A549 (cell line): ENCODE measurements at regions of chr6 and their contacts with region 1.

Region 1: GRCh38 chr6:14066782-14067406 is 50.7 kb upstream of the CD83 start:
- DNase-seq: peak; percentile 54 to 65
- ATAC-seq: peak; percentile 74 to 83
- H3K4me3 ChIP-seq: no peak overlapping the region
- H3K27ac ChIP-seq: no peak overlapping the region
- H3K4me1 ChIP-seq: no peaks in the 10 kb centered on the region
- CTCF ChIP-seq: peak; percentile 70
- EP300 ChIP-seq: no peak
- POLR2A ChIP-seq: no peak
- RAD21 ChIP-seq: peak; percentile 78 to 81

Region 2: DNA sequence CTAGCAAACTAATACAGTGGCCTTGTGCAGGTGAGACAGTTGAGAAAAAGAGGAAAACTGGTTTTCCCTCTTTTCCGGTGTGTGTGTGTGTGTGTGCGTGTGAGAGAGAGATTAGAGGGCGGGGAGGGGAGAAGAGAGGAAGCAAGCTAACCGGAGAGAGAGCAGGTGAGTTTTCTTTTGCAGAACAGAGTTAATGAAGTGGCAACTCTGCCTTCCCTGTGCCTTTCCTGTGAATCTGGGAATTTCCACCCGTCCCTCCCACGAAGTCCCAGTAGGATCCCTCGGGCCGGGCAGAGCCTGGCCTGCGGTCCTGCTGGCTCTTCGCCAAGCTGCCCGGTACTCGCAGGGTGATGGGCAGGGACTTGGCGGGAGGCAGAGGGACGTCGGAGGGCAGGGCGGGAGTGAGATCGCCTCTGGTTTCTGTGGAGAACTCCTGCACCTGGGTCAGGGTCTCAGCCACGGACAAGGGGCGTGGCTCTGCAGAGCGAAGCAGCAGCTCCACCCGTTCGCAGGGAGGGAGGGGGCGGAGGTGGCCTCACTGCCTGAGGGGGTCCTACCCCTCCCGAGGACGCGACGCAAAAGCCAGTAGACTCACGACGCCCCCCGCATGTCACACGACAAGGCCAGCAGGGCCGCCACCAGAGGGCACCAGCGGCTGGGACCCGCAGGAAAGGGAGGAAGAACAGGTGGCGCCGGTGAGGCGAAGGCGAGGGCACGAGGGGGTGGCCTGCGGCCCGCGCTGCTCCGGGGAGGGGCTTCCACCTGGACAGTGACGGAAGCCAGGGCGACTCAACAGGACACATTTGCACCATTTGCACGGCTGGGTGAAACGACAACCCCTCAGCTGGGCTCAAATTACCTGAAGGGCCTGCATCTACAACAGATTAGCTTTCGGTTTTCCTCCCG is 193.4 kb before region 1 on chr6:
- CTCF ChIA-PET with region 1: interaction called, 22 read pairs
- POLR2A ChIA-PET with region 1: no interaction called
- DNase-seq: peak; percentile 58 to 66
- ATAC-seq: peak; percentile 85 to 94
- H3K4me3 ChIP-seq: peak overlapping the region; percentile 61
- H3K27ac ChIP-seq: peak overlapping the region; percentile 32 to 77; a peak in 4 of 6 replicates
- H3K4me1 ChIP-seq: no peaks in the 10 kb centered on the region; the same call in 2 of the 3 replicates
- CTCF ChIP-seq: peak; percentile 75
- EP300 ChIP-seq: no peak
- POLR2A ChIP-seq: no peak
- RAD21 ChIP-seq: peak; percentile 44 to 59

Region 3: GRCh38 chr6:13920552-13920951 is 146.3 kb before region 1 on chr6:
- CTCF ChIA-PET with region 1: interaction called, 186 read pairs
- POLR2A ChIA-PET with region 1: no interaction called
- DNase-seq: no peak
- ATAC-seq: no peak
- H3K4me3 ChIP-seq: no peak overlapping the region
- H3K27ac ChIP-seq: no peak overlapping the region
- H3K4me1 ChIP-seq: 0 out of 3 replicates have a peak, but pooled peaks cover 6% of the 10 kb centered on the region
- CTCF ChIP-seq: no peak
- EP300 ChIP-seq: no peak
- POLR2A ChIP-seq: no peak
- RAD21 ChIP-seq: no peak

Region 4: GRCh38 chr6:14055541-14055940 is 11.4 kb before region 1 on chr6:
- CTCF ChIA-PET with region 1: interaction called, 37 read pairs
- POLR2A ChIA-PET with region 1: no interaction called
- DNase-seq: no peak
- ATAC-seq: no peak
- H3K4me3 ChIP-seq: no peak overlapping the region
- H3K27ac ChIP-seq: no peak overlapping the region
- H3K4me1 ChIP-seq: peaks cover 11% of the 10 kb centered on the region
- CTCF ChIP-seq: no peak
- EP300 ChIP-seq: no peak
- POLR2A ChIP-seq: no peak
- RAD21 ChIP-seq: no peak